HEK293T (cell line): ENCODE measurements at regions of chr19 and their contacts with region 1.

Region 1: DNA sequence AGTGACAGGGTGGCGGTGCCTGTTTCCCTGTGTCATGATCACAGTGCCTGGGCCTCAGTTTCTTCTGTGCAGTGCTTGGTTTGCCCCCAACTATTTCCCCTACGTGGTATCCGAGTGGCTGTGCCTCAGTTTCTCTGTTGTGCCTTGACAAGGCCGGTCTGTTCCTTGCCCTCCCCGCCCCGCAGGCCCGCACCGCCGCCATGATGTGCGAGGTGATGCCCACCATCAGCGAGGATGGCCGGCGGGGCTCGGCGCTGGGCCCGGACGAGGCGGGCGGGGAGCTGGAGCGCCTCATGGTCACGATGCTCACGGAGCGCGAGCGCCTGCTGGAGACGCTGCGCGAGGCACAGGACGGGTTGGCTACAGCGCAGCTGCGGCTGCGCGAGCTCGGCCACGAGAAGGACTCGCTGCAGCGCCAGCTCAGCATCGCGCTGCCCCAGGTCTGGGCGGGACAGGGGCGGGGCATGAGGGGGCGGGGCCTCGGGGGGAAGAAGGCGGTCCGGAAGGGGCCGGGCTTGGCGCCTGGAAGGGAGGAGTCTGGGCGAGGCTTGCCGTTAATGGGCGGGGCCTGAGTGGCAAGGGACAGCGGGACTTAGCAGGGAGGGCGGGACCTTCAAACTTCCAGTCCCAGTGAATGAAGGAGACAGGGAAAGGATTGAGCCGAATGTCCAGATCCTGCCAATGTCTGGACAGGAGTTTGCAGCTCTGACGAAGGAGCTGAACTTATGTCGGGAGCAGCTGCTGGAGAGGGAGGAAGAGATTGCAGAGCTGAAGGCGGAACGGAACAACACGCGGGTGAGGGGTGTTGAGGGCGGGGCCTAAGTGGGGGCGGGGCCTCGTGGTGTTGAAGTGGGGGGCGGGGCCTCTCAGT is 8.6 kb downstream of the PPFIA3 start:
- DNase-seq: peak; percentile 98

Region 2: GRCh38 chr19:48989691-48990291 is 138.1 kb before region 1 on chr19:
- CTCF ChIA-PET with region 1: no interaction called
- POLR2A ChIA-PET with region 1: no interaction called
- DNase-seq: no peak

Region 3: DNA sequence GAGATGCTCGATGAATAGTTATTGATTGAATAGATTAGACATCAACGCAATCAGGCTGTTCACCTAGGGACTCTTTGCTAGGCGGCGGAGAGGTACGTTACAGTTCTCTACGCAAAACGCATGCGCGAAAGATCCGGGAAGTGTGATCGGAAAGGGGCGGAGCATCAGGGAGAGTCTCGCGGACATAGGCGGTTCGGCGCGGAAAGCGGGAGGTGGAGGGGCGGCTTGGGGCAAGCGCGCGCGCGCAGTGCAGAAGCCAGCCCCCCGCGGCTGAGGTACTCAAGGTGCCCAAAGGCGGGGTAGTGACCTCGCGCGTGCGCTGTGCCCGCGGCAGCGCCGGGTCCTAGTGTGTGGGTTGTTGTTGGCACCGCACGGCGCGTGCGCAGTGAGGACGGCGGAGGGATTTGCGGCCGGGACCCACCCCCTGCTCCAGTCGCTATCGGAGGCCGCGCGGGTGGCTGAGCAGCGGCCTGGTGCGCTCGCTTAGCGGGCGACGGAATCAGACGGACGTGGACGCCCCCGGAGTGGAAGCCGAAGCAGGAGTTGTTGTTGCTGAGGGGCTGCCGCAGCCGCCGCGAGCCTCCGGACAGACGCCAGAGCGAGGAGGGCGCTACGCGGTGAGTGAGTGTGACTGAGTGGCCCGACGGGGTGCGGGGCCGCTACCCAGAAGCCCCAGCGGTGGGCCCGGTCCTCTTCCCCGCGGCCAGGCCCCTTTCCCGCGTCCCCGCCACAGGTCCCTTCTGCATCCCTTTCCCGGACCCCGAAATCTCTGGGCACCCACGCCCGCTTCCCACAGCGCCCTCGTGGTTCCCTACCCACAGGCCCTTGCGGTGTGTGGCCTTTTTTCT is 42.7 kb before region 1 on chr19 and contains the start of gene SNRNP70:
- CTCF ChIA-PET with region 1: no interaction called
- POLR2A ChIA-PET with region 1: no interaction called
- DNase-seq: peak; percentile 99

Region 4: GRCh38 chr19:49113762-49114629 is 13.9 kb before region 1 on chr19 and contains the start of gene LIN7B:
- CTCF ChIA-PET with region 1: interaction called, 3 read pairs
- POLR2A ChIA-PET with region 1: interaction called, 12 read pairs
- DNase-seq: peak; percentile 86

Region 5: DNA sequence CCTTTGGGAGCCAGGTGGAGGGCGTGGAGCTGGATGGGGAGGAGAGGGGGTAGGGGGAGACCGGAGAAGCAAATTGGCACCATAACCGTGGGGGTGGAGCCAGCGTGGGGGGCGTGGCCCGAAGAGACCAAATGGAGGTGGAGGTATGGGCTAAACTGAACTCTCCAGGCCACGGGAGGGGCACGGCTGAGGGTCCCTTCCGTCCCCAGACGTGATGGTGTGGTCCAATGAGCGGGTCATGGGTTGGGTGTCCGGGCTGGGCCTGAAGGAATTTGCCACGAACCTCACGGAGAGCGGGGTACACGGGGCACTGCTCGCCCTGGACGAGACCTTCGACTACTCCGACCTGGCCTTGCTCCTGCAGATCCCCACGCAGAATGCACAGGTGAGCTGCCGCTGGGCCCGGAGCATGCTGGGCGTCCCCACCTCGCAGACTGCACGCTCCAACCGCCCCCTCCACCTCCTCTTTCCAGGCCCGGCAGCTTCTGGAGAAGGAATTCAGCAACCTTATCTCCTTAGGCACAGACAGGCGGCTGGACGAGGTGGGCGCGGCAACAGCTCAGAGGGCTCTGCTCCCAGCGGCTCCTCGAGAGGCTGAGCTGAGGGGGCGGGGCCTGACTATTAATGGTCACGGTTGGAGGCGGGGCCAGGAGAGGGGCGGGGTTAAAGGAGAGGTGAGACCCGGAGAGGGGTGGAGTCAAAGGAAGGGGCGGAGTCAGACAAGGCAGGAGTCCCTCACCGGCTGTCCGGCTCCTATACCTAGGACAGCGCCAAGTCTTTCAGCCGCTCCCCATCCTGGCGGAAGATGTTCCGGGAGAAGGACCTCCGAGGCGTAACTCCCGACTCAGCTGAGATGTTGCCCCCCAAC is 21.1 kb after region 1 on chr19:
- CTCF ChIA-PET with region 1: interaction called, 6 read pairs
- POLR2A ChIA-PET with region 1: interaction called, 11 read pairs
- DNase-seq: peak; percentile 93